Endothelial cell of umbilical vein (primary cell): ENCODE measurements at regions of chr17 and their contacts with region 1.

Region 1: DNA sequence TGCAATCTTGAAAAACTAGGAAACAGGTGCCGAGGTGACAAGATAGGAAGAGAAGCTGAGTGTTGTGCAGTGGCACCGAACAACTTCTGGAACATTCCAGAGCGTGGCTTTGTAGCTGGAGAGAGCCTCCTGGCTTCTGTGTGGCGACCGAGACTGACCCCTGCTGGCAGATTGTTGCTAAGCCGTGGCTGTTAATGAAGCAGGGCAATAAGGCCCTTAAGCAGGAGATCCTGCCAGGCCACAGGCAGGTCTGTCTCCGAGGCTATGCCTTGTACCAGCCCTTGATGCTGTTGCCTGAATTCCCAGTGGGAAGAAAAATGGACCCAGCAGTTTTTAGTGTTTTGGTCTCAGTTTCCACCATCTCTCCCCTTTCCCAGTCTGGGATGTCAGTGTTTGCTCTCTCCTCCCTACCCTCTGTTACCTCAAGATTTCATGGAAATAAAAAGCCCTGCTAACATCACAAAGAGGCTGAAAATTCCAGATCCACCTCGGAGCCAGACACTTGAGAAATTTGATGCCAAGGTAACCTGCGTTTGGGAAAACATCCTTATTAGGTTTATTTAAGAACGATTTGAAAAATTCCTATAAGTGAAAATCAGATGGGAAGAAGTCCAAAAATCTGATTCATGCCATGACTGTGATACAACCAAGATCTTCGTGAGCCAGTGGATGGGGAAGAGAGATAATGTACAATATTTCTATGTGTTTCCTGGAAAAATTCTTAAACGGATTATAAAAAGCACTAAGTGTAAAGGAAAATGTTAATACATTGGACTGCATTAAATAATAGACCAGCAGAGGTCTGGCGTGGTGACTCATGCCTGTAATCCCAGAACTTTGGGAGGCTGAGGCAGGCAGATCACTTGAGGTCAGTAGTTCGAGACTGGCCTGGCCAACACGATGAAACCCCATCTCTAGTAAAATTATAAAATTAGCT is 265.1 kb downstream of the PRKCA start:
- DNase-seq: peak; percentile 97
- H3K4me3 ChIP-seq: no peak overlapping the region
- H3K27ac ChIP-seq: peak overlapping the region; percentile 90
- H3K4me1 ChIP-seq: peaks cover 16% of the 10 kb centered on the region
- H3K27me3 ChIP-seq: no peaks in the 10 kb centered on the region
- CTCF ChIP-seq: peak; percentile 90 to 93
- POLR2A ChIP-seq: no peak

Region 2: DNA sequence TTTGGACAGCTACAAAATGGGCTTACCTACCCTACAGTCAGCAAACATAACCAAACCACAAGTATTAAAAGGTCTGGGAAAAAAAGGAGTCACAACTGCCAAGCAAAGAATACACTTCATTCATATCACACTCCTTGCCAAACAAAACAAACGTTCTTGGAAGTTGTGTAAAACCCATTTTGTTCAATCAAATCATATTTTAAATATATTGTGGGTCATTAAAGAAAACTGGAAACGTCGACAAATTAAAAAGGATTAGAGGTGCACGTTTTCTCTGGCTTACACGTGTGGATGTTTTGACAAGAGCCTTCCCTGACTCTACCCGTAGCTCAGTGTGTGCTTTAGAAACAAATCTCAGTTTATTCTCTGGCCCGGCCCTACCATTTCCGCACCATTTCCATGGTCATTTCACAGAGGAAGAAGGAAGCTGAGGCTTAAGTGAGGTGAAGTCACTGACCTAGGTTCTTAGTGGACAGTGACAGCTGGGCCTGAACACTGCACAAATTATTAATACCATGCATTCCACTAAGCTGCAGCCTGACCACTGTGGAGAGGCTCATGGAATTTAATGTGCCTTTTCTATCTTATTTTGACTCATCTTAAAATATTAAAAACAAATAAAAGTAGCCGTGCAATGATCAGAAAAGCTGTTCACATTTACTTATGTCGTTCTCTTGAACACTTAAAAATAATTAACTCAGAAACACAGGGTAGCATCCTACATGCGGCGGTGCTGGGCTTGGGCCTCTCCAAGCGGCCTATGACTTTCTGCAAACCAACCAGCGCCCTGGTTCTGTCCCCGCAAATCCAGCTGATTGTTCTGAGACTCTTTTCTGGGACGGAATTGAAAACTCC is 376.5 kb before region 1 on chr17:
- CTCF ChIA-PET with region 1: no interaction called
- POLR2A ChIA-PET with region 1: no interaction called
- dilution Hi-C with region 1: no loop called
- intact Hi-C with region 1: no loop called
- DNase-seq: peak; percentile 75
- H3K4me3 ChIP-seq: peak overlapping the region; percentile 76 to 92 (median 82)
- H3K27ac ChIP-seq: peak overlapping the region; percentile 50
- H3K4me1 ChIP-seq: peaks cover 22% of the 10 kb centered on the region
- H3K27me3 ChIP-seq: no peaks in the 10 kb centered on the region
- CTCF ChIP-seq: no peak
- POLR2A ChIP-seq: no peak

Region 3: GRCh38 chr17:66255112-66255511 is 312.4 kb before region 1 on chr17:
- CTCF ChIA-PET with region 1: interaction called, 33 read pairs
- POLR2A ChIA-PET with region 1: no interaction called
- dilution Hi-C with region 1: no loop called
- intact Hi-C with region 1: loop called (anchors 1 kb)
- DNase-seq: peak; percentile 74
- H3K4me3 ChIP-seq: no peak overlapping the region
- H3K27ac ChIP-seq: no peak overlapping the region
- H3K4me1 ChIP-seq: peaks cover 2% of the 10 kb centered on the region
- H3K27me3 ChIP-seq: no peaks in the 10 kb centered on the region
- CTCF ChIP-seq: peak; percentile 50 to 58
- POLR2A ChIP-seq: no peak

Region 4: GRCh38 chr17:66301797-66302741 is 265.4 kb before region 1 on chr17 and contains the start of gene PRKCA:
- CTCF ChIA-PET with region 1: interaction called, 19 read pairs
- POLR2A ChIA-PET with region 1: no interaction called
- dilution Hi-C with region 1: no loop called
- intact Hi-C with region 1: loop called (anchors 1 kb)
- DNase-seq: peak; percentile 52
- H3K4me3 ChIP-seq: peak within 1 kb of the TSS; percentile 76 to 90 (median 83)
- H3K27ac ChIP-seq: peak within 1 kb of the TSS; percentile 27
- H3K4me1 ChIP-seq: peaks cover 26% of the 10 kb centered on the region
- H3K27me3 ChIP-seq: no peaks in the 10 kb centered on the region
- CTCF ChIP-seq: no peak
- POLR2A ChIP-seq: peak; percentile 93
- total RNA-seq, gene PRKCA: 27.3 and 34.2 TPM in 2 replicates

Region 5: GRCh38 chr17:66459811-66460270 is 107.7 kb before region 1 on chr17:
- CTCF ChIA-PET with region 1: interaction called, 15 read pairs
- POLR2A ChIA-PET with region 1: no interaction called
- dilution Hi-C with region 1: no loop called
- intact Hi-C with region 1: loop called (anchors 1 kb)
- DNase-seq: peak; percentile 97
- H3K4me3 ChIP-seq: peak overlapping the region in 1 of 3 experiments; percentile 23
- H3K27ac ChIP-seq: peak overlapping the region; percentile 97
- H3K4me1 ChIP-seq: peaks cover 34% of the 10 kb centered on the region
- H3K27me3 ChIP-seq: no peaks in the 10 kb centered on the region
- CTCF ChIP-seq: no peak
- POLR2A ChIP-seq: no peak

Region 6: DNA sequence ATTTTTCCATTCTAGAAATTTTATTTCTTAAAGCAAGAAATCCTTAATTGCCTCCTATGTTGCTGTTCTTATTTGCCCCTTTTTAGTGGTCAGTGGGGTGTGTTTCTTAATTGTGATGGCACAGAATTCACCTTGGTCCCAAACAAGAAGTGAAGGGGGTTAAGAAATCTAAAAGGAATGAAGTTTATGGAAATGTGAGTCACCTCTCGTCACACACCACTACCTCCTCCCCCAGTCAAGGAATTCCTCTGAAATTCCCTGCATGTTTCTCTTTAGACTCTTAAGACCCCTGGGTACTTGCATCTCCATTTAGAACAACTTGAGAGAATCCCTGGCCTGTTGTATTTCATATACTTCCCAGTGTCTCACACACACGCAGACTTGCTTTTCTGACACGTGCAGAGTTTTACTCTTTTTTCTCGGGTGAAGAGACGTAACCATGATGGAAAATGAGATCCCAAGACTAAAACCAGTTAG is 17.7 kb before region 1 on chr17:
- CTCF ChIA-PET with region 1: interaction called, 7 read pairs
- POLR2A ChIA-PET with region 1: no interaction called
- dilution Hi-C with region 1: no loop called
- intact Hi-C with region 1: loop called (anchors 2 kb)
- DNase-seq: peak; percentile 46
- H3K4me3 ChIP-seq: no peak overlapping the region
- H3K27ac ChIP-seq: peak overlapping the region; percentile 33
- H3K4me1 ChIP-seq: peaks cover 39% of the 10 kb centered on the region
- H3K27me3 ChIP-seq: no peaks in the 10 kb centered on the region
- CTCF ChIP-seq: no peak
- POLR2A ChIP-seq: no peak

Region 7: GRCh38 chr17:66673668-66674315 is 106.3 kb after region 1 on chr17:
- CTCF ChIA-PET with region 1: interaction called, 15 read pairs
- POLR2A ChIA-PET with region 1: no interaction called
- dilution Hi-C with region 1: no loop called
- intact Hi-C with region 1: loop called (anchors 1 kb)
- DNase-seq: peak; percentile 68
- H3K4me3 ChIP-seq: no peak overlapping the region
- H3K27ac ChIP-seq: no peak overlapping the region
- H3K4me1 ChIP-seq: peaks cover 2% of the 10 kb centered on the region
- H3K27me3 ChIP-seq: no peaks in the 10 kb centered on the region
- CTCF ChIP-seq: peak; percentile 64 to 74
- POLR2A ChIP-seq: no peak